PC-3 (cell line): ENCODE measurements at regions of chr9 and their contacts with region 1.

Region 1: GRCh38 chr9:77163884-77164283 is 13.4 kb upstream of the VPS13A start:
- DNase-seq: no peak
- ATAC-seq: no peak
- H3K4me3 ChIP-seq: no peak overlapping the region
- H3K27ac ChIP-seq: no peak overlapping the region
- H3K4me1 ChIP-seq: no peaks in the 10 kb centered on the region; the same call in 1 of the 2 replicates
- H3K27me3 ChIP-seq: peaks cover 12% of the 10 kb centered on the region; the same call in 1 of the 2 replicates
- CTCF ChIP-seq: no peak

Region 2: DNA sequence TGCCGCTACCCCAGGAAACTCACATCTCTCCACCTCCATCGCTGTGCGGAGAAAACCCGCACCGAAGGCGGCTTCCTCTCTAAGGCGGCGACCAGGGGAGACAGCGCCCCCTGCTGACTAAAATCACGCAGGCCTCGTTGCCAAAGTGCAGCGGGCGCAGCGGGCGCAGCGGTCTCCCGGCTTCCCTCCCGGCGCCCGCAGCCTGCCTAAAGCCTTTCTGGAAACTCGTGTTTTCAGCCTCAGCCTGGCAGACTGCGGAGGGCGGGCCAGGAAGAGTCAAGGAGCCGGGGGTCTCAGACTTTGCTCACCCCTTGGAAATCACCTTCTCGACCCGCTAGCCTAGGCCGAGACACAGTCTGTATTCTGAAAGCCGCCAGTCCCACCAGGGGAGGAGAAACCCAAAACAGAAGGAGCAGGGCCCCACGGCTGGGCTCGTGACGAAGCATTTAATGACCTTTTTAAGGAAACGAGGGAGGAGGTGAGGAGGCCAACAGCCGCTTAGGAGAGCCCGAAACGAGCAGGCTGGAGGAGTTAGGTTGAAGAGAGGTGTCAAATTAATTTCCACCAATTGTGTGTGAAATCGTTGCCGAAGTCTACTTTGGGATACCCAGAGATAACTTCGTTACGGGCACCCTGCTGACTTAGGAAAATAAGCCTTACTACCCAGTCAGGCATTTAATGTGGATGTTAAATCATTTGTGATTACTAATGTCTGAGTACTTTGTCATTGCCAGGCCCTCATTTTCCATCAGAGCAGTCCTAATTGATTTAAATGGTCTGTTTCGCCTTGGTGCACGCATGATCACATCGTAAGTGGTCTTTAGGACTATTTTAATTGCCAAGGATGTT is 151.7 kb before region 1 on chr9:
- CTCF ChIA-PET with region 1: no interaction called
- POLR2A ChIA-PET with region 1: no interaction called
- intact Hi-C with region 1: loop called (anchors 10 kb)
- DNase-seq: peak; percentile 17
- ATAC-seq: peak; percentile 31; the same call in 1 of the 2 replicates
- H3K4me3 ChIP-seq: no peak overlapping the region
- H3K27ac ChIP-seq: no peak overlapping the region
- H3K4me1 ChIP-seq: no peaks in the 10 kb centered on the region
- H3K27me3 ChIP-seq: peaks cover 79% of the 10 kb centered on the region
- CTCF ChIP-seq: peak; percentile 69

Region 3: DNA sequence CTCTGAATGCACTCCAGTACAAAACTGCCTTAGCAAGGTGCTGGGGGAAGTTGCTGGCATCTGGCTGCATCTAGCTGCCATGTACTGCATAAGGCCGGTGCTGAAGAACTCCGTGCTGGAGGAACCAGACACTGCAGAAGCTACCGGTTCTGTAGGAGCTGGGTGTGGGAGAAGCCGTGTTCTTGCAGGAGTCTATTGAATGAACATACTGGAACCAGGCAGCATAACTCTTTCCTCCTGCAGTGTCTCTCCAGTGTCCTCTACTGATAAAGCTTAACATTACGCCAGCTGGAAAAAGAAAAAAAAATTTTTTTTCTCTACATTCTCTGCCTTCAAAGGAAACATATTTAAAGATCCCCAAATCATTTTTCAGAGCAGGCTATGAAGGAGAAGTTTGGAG is 52.0 kb after region 1 on chr9:
- CTCF ChIA-PET with region 1: no interaction called
- POLR2A ChIA-PET with region 1: no interaction called
- intact Hi-C with region 1: loop called (anchors 1 kb)
- DNase-seq: no peak
- ATAC-seq: peak; percentile 38; the same call in 1 of the 2 replicates
- H3K4me3 ChIP-seq: no peak overlapping the region
- H3K27ac ChIP-seq: no peak overlapping the region
- H3K4me1 ChIP-seq: peaks cover 3% of the 10 kb centered on the region; the same call in 1 of the 2 replicates
- H3K27me3 ChIP-seq: no peaks in the 10 kb centered on the region
- CTCF ChIP-seq: 0 out of 2 replicates have a peak, but pooled peaks have one; percentile 26